ENCODE measurements at regions of chr2 and their contacts with region 1.

Region 1: DNA sequence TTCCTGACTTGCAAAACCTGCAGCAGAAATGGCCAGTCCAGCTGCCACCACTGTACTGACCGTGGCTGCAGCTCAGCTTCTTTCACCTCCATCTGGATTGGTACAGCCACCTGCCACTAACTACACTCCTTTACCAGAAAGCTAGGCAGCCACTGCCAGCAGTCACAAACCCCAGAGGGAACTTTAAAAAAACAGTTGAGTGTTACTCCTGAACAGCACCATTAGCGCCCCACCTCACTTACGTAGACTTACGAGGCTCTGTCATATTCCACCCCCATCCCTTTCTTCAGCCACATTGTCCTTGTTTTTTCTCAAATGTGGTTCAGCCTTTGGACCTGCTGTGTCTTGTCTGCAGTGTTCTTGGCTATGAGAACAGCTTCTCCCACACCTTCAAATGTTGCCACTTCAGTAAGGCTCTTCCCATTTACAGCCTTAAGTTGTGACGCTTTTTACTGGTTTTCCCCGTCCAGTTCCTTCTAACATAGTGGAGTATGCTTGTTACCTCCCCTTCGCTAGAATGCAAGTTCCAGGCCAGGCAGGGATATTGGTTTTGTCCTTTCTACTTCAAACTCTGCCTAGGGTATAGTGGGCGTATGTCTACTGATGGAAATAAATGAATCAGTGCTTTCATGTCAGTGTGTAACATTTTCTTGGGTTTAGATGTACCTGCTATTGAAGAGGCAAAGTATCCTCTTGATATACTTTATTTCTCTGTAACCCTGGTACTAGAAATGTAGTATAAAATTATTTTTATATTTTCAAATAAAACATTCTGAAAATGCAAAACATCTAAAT is 17.1 kb downstream of the HNRNPA3 start:
- DNase-seq: no peak
- H3K4me3 ChIP-seq: no peak overlapping the region
- CTCF ChIP-seq: no peak

Region 2: DNA sequence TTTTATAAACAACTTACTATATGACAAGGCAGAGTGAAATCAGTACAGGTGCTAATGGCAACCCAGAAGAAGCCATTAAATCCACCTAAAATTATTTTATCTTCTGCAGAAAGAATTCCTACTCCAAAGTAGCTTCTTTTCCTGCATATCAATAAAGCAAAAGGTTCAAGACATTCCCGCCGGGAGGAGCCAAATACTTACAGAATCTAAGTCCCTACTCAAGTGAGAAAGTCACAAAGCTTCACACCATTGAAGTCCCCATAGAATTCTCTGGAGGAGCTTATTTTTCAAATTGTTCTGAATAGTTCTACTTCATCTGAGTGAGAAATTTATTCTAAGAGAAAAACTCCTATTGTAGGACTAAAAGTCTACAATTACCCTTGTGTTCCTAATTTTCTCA is 250.7 kb before region 1 on chr2:
- CTCF ChIA-PET with region 1: no interaction called
- POLR2A ChIA-PET with region 1: no interaction called
- DNase-seq: no peak
- H3K4me3 ChIP-seq: no peak overlapping the region
- CTCF ChIP-seq: no peak

Region 3: GRCh38 chr2:177143444-177143843 is 86.2 kb before region 1 on chr2:
- CTCF ChIA-PET with region 1: no interaction called
- POLR2A ChIA-PET with region 1: no interaction called
- DNase-seq: peak; percentile 44
- H3K4me3 ChIP-seq: no peak overlapping the region
- CTCF ChIP-seq: no peak

Region 4: DNA sequence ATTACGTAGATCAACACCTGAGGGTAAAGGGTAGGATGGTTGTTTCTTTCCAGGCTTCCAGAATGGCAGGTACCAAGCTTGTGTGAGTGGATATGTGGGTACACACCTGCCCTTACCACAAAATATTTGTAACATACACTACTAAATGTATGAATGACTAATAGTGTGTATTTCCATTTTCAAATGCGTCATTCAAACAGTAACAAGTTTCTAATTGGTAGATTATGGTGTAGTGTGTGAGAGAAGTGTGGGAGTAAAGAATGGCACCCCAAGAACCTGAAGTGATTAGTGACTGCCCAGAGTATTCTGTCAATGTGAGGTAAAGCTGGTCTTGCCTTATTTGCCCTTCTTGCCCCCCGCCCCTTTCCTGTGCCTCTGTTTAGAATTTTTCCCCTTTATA is 184.1 kb after region 1 on chr2:
- CTCF ChIA-PET with region 1: interaction called, 10 read pairs
- POLR2A ChIA-PET with region 1: interaction called, 4 read pairs
- DNase-seq: no peak
- H3K4me3 ChIP-seq: no peak overlapping the region
- CTCF ChIP-seq: no peak